MCF 10A (cell line): ENCODE measurements at regions of chrX and their contacts with region 1.

Region 1: GRCh38 chrX:3124031-3124430 is 82.8 kb downstream of the ARSF start:
- DNase-seq: no peak
- H3K4me3 Mint-ChIP-seq: no peak overlapping the region
- H3K27ac Mint-ChIP-seq: no peak overlapping the region
- H3K4me1 Mint-ChIP-seq: peaks cover 4% of the 10 kb centered on the region
- H3K27me3 Mint-ChIP-seq: no peaks in the 10 kb centered on the region
- CTCF ChIP-seq: no peak

Region 2: GRCh38 chrX:3161681-3162080 is 37.6 kb after region 1 on chrX:
- CTCF ChIA-PET with region 1: no interaction called
- POLR2A ChIA-PET with region 1: no interaction called
- intact Hi-C with region 1: no loop called
- DNase-seq: no peak
- H3K4me3 Mint-ChIP-seq: no peak overlapping the region
- H3K27ac Mint-ChIP-seq: no peak overlapping the region
- H3K4me1 Mint-ChIP-seq: peaks cover 7% of the 10 kb centered on the region
- H3K27me3 Mint-ChIP-seq: peaks cover 33% of the 10 kb centered on the region
- CTCF ChIP-seq: no peak

Region 3: GRCh38 chrX:3184176-3184930 is 60.3 kb after region 1 on chrX:
- CTCF ChIA-PET with region 1: no interaction called
- POLR2A ChIA-PET with region 1: no interaction called
- intact Hi-C with region 1: no loop called
- DNase-seq: peak; percentile 28
- H3K4me3 Mint-ChIP-seq: peak overlapping the region; percentile 21
- H3K27ac Mint-ChIP-seq: no peak overlapping the region
- H3K4me1 Mint-ChIP-seq: peaks cover 18% of the 10 kb centered on the region
- H3K27me3 Mint-ChIP-seq: no peaks in the 10 kb centered on the region
- CTCF ChIP-seq: no peak

Region 4: DNA sequence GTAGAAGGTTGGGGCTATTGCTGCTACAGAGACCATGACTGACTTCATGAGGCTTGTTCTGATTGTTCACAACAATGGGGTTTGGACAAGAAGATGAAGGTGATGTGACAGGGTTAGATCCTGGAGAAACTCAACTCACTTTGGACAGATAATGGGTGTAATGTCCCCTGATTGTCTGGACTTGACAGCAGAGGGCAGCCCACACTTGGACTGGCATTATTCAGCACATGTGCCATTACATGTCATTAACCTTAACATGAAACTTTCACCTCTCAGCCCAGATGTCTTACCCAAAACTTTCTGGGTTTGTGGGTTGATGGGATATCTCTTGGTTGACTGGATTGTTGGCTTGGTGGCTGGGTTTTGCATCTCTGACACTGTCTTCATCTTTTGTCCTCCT is 120.9 kb after region 1 on chrX:
- CTCF ChIA-PET with region 1: no interaction called
- POLR2A ChIA-PET with region 1: no interaction called
- intact Hi-C with region 1: loop called (anchors 2 kb)
- DNase-seq: peak; percentile 49
- H3K4me3 Mint-ChIP-seq: no peak overlapping the region
- H3K27ac Mint-ChIP-seq: no peak overlapping the region
- H3K4me1 Mint-ChIP-seq: peaks cover 10% of the 10 kb centered on the region
- H3K27me3 Mint-ChIP-seq: peaks cover 32% of the 10 kb centered on the region
- CTCF ChIP-seq: peak; percentile 55